ENCODE measurements at regions of chr20 and their contacts with region 1.

Region 1: GRCh38 chr20:25696384-25697131 is at the start of gene ZNF337:
- DNase-seq: peak; percentile 97
- total RNA-seq, gene ZNF337: 9.3 TPM

Region 2: DNA sequence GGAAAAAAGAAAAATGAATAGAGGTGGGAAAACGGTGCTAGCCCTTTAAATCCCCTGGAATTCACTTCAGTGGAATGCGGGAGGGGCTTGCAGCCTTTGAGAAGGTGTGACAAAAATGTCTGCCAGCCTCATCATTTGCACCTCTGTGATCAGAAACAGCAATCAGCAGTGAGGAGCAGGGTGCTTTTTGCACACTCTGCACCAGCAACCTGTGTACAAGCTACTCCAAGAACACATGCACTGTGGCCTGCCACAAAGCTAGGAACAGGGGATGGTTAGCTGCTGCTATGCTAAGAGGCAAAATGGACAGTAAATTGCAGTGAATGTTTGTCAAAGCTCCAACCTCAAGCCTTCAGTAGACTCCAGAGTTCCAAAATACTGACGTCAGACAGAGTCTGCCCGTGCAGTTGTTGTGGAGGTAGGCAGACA is 259.4 kb before region 1 on chr20:
- intact Hi-C with region 1: no loop called
- DNase-seq: no peak

Region 3: DNA sequence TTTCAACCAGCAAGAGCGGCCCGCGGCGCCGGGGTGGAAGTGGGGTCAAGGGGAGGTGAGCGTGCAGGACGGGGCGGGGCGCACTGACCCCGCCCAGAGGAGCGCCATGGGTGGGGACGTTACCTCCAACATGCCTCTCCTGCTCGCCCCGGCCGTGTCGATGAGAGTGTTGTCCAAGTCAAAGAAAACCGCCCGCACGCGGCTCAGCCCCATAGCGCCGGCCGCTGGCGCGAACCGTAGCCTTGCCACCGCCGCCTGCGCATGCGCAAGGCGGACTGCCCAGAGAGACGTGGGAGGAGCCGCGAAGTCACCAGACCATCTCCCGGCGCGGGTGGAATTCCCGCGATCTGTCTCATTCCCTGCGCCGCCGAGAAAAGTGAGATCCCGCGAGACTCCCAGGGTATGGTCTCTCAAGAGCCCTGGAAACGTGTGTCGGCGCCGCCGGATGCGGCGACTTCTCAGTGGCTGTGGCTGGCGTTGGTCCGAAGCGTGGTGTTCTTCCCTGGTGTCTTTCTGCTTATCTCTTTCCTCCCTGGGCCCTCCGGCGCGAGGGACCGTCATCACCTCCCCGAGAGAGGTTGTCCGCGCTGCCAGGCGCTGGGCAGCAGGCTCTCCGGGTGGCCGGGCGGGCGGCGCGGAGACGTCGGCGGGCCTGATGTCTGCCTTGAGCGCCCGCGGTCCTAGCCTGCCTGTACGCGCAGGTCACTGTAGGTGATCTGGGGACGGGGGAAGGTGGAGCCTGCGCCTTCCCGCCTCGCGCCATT is 72.6 kb before region 1 on chr20 and contains the start of gene NANP:
- intact Hi-C with region 1: loop called (anchors 5 kb)
- DNase-seq: peak; percentile 96
- total RNA-seq, gene NANP: 2.8 TPM

Region 4: DNA sequence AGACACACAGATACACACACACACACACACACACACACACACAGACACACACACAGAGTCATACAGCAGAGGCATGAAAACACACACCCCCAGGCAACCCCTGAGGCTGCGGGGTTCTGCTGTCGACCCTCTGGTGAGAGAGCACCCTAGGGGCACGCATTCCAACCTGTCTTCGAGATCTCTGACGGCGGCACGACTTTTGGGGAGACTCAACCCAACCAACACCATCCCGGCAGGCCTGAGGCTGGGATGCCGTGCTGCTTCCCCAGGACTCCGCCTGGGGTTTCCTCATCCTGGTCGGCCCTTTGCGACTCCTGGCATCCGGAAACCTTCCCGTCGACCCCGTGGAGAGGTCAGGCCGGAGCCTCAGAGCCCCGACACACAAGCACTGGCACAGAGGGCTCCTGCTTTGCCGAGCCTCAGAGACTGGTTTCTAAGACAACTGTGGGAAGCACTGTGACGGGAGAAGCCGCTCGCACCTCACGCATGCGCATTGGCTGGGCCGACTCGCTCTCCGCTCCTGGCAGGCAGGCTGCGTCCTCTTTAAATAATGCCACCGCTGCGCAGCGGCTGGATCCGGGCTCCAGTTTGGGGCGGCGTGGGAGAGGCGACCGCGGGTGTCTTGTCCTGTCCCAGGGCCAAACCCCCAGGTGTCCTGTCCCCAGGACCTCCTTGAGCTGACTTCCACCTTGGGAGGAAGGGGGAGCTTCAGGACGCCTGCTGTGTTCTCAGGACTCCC is 169.0 kb after region 1 on chr20:
- intact Hi-C with region 1: loop called (anchors 5 kb)
- DNase-seq: peak; percentile 86